Activated T-helper 1 cell treated with anti-CD3 and anti-CD28 coated beads, Interleukin-12 subunit alpha, Interleukin-12 subunit beta, Interleukin-2, Interleukin-4 antibody, amounts not matched to agents 30 ng/mL and 10 ng/mL and 1 ng/mL, durations not matched to agents 14 hours and 24 hours and 36 hours (primary cell): ENCODE measurements at regions of chr14 and their contacts with region 1.

Region 1: GRCh38 chr14:68843471-68844209 is 50.8 kb upstream of the ZFP36L1 start:
- DNase-seq: peak; percentile 56
- H3K4me3 Mint-ChIP-seq: peak overlapping the region; percentile 13
- H3K27ac Mint-ChIP-seq: no peak overlapping the region
- H3K4me1 Mint-ChIP-seq: peaks cover 24% of the 10 kb centered on the region
- H3K27me3 Mint-ChIP-seq: peaks cover 13% of the 10 kb centered on the region

Region 2: GRCh38 chr14:67837011-67837624 is 1006.5 kb before region 1 on chr14:
- intact Hi-C with region 1: loop called (anchors 1 kb)
- DNase-seq: no peak
- H3K4me3 Mint-ChIP-seq: no peak overlapping the region
- H3K27ac Mint-ChIP-seq: no peak overlapping the region
- H3K4me1 Mint-ChIP-seq: no peaks in the 10 kb centered on the region
- H3K27me3 Mint-ChIP-seq: no peaks in the 10 kb centered on the region

Region 3: GRCh38 chr14:67934008-67934481 is 909.6 kb before region 1 on chr14:
- intact Hi-C with region 1: loop called (anchors 1 kb)
- DNase-seq: no peak
- H3K4me3 Mint-ChIP-seq: no peak overlapping the region
- H3K27ac Mint-ChIP-seq: no peak overlapping the region
- H3K4me1 Mint-ChIP-seq: peaks cover 5% of the 10 kb centered on the region
- H3K27me3 Mint-ChIP-seq: no peaks in the 10 kb centered on the region

Region 4: DNA sequence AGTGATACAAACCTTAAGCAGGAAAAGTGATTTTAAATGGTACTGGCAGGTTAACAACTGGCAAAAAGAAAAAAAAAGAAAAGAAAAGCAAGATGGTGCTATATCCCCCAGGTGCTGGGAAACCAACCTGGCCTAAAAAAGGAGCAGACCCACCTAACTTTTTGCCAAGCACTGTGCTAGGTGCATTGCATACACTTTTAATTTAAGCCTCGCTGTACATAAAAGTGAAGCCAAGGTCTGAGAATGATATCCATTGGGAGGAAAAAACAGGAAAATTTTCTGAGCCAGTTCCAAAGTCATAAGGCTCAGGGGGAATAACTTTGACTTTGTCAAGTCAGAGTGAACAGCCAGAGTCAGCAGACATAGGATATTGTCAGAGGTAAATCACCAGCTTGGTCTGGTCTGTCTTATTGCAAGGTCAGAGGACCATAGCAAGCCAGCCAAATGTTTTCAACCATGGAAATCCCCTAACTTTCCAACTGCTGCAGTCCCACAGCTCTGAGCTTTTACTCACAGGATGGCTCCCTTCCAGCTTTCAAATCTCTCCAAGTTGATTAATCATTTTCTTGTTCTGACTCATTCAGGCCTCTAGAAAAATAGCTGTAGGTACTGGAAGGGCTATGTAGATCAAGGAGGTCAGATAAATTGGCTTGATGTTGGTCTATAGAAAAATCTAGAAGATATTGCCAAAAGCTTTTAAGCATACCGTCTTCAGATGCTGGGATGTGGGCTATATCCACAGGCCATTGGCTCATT is 611.2 kb before region 1 on chr14:
- intact Hi-C with region 1: loop called (anchors 1 kb)
- DNase-seq: peak; percentile 9
- H3K4me3 Mint-ChIP-seq: no peak overlapping the region
- H3K27ac Mint-ChIP-seq: no peak overlapping the region
- H3K4me1 Mint-ChIP-seq: peaks cover 7% of the 10 kb centered on the region
- H3K27me3 Mint-ChIP-seq: no peaks in the 10 kb centered on the region

Region 5: DNA sequence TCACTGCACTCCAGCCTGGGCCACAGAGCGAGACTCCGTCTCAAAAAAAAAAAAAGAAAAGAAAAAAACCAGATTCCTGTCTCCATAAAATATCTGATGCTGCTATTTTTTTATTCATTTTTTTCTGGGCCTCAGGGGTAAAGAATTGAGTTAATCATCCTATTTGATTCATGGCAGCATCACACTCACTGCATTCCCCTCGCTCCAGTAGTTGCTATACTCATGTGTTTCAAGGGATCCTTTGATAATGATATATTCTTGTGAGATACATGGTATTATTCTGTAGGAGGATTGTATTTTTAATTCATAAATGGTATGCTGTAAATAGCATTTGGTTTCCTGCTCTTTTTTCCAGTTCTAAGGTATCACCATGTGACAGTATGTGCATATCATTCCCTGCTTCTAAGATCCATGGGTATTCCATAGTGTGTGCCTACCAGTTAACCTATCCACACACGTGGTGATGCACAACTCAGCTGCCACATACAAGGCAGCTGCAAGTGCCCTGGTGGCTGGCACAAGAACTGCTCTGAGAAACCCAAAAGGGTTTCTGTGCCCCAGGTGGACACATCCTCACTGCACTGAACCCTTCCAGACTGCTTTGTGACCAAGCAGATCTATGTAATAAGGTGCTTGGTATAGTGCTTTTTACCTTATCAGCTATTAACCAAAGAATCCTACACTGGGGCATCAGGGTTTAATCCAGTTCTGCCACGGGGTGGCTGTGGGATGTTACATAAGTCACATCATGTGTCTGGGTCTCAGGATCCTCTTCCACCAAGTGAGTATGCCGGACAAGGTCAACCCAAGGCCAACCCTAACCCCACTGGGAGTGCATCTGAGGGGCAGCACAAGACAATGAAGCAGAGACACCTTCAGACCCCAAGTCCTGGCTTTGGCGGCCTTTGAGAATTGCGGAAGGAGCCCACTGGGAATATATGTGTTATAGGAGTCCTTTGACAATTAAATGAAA is 125.3 kb before region 1 on chr14:
- intact Hi-C with region 1: loop called (anchors 5 kb)
- DNase-seq: no peak
- H3K4me3 Mint-ChIP-seq: no peak overlapping the region
- H3K27ac Mint-ChIP-seq: no peak overlapping the region
- H3K4me1 Mint-ChIP-seq: peaks cover 56% of the 10 kb centered on the region
- H3K27me3 Mint-ChIP-seq: peaks cover 2% of the 10 kb centered on the region

Region 6: GRCh38 chr14:68824517-68825347 is 18.9 kb before region 1 on chr14:
- intact Hi-C with region 1: loop called (anchors 2 kb)
- DNase-seq: no peak
- H3K4me3 Mint-ChIP-seq: no peak overlapping the region
- H3K27ac Mint-ChIP-seq: no peak overlapping the region
- H3K4me1 Mint-ChIP-seq: peaks cover 22% of the 10 kb centered on the region
- H3K27me3 Mint-ChIP-seq: peaks cover 5% of the 10 kb centered on the region